ENCODE measurements at regions of chr16 and their contacts with region 1.

Region 1: DNA sequence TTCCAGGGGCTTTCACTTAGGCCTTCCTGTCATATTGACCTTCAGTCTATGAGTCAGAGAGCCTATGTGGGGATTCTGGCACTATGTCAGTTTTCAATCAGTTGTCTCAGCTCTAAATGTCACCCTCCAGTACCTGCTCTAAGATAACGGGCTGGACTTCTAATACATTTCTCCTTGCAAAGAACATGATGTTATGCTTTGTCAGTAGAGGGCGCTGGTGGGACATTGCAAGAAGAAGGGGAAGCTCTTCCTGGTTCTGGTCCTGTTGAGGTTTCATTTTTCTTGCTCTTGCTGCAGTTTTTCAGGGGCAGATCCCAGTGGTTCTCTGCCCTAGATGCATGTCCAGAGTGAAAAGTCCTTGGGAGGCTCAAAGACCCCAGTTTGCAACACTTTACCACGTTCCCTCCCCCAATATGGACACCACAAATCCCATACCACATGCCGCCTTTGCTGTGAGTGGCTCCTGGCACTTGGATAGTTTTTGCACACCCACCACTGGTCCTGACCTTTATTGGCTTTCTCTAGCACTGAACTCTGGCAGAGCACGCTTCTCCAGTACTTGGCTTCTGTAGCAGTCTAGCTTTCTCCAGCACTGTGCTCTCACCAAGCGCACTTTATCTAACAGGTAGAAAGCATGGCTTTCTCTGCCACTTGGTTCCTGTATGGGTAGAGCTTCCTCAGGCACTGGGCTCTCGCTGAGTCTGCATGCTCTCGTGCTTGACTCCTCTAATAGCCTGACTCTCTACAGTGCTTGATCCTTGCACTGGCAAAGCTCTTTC is 49.0 kb downstream of the BCL7C start:
- DNase-seq: peak; percentile 13 to 82
- H3K4me3 ChIP-seq: no peak overlapping the region
- H3K27ac ChIP-seq: no peak overlapping the region
- H3K4me1 ChIP-seq: no peaks in the 10 kb centered on the region
- H3K27me3 ChIP-seq: no peaks in the 10 kb centered on the region
- CTCF ChIP-seq: peak; percentile 3 to 90 (median 86)
- EP300 ChIP-seq: no peak
- POLR2A ChIP-seq: no peak
- RAD21 ChIP-seq: peak; percentile 90 to 94

Region 2: DNA sequence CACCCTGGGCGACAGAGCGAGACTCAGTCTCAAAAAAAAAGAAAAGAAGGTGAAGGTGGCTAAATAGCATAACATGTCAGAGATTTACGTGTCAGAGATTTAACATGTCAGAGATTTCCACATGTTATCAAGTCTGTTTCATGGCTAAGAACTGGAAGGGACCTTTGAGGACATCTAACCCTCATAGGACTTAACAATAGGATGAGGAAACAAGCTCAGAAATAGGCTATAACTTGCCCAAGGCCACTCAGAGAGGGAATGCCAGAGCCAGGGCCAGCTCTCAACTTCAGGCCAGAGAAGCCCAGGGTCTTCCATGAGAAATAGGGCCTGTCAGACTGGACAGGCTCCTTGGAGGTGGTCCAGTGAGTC is 31.1 kb before region 1 on chr16:
- CTCF ChIA-PET with region 1: interaction called, 19 read pairs
- POLR2A ChIA-PET with region 1: no interaction called
- DNase-seq: no peak
- H3K4me3 ChIP-seq: peak overlapping the region; percentile 21 to 55 (median 29); a peak in 5 of 8 replicates
- H3K27ac ChIP-seq: no peak overlapping the region
- H3K4me1 ChIP-seq: no peaks in the 10 kb centered on the region; a peak in 4 of 7 replicates
- H3K27me3 ChIP-seq: peaks cover 0 to 5% (median 2%) of the 10 kb centered on the region in 4 experiments; a peak in 1 of 7 replicates
- CTCF ChIP-seq: no peak
- EP300 ChIP-seq: no peak
- POLR2A ChIP-seq: no peak
- RAD21 ChIP-seq: no peak

Region 3: GRCh38 chr16:30829130-30830071 is 15.5 kb before region 1 on chr16:
- CTCF ChIA-PET with region 1: interaction called, 20 read pairs
- POLR2A ChIA-PET with region 1: interaction called, 3 read pairs
- DNase-seq: no peak
- H3K4me3 ChIP-seq: no peak overlapping the region
- H3K27ac ChIP-seq: no peak overlapping the region
- H3K4me1 ChIP-seq: no peaks in the 10 kb centered on the region
- H3K27me3 ChIP-seq: peaks cover 0 to 2% (median 0%) of the 10 kb centered on the region in 4 experiments; a peak in 3 of 7 replicates
- CTCF ChIP-seq: peak in 1 of 3 experiments; percentile 18; a peak in 1 of 4 replicates
- EP300 ChIP-seq: no peak
- POLR2A ChIP-seq: no peak
- RAD21 ChIP-seq: no peak

Region 4: DNA sequence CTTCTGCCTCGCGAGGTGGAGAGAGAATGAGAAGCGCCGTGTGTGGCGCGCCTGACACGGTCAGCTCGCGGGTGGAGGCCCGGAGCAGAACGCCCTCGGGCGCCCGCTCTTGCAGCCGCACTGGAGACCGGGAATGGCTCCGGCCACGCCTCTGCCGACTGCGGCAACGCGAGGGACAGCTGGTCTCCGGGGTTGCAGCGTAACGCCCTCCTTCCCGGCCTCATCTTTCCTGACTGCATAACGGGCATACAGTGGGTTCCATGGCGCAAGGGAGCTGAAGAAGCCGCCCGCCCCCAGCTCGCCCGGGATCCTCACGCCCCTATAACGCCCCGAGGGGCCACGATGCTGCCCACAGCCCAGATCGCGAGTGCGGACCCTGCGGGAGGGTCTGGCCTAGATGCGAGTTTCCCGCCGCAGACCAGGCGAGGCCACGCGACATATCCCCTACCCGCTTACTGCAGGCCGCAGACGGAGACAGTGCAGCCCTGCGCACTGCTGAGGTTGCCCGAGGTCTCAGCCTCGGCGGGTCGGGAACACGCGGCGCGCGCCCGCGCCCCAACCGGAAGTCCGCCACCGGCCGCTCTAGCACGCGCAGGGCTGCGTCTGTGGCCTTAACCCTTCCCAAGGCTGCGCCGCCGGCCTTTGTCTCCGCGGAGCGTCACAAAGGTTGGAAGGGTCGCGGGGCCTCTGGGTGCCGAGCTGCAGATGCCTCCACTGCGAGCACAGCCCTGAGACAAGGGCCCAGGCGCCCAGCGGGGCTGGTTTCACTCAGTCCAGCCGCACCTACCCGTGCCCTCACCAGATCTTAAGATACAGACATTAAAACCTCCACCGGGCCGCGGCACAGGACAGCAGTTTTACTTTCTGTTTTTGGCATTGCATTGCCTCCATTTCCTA is 30.2 kb after region 1 on chr16:
- CTCF ChIA-PET with region 1: interaction called, 49 read pairs
- POLR2A ChIA-PET with region 1: interaction called, 12 read pairs
- DNase-seq: peak in 1 of 2 experiments; percentile 94
- H3K4me3 ChIP-seq: peak overlapping the region; percentile 61 to 97 (median 92)
- H3K27ac ChIP-seq: peak overlapping the region; percentile 77
- H3K4me1 ChIP-seq: peaks cover 0 to 6% (median 3%) of the 10 kb centered on the region in 4 experiments; a peak in 5 of 7 replicates
- H3K27me3 ChIP-seq: peaks cover 0 to 26% (median 11%) of the 10 kb centered on the region in 4 experiments; a peak in 5 of 7 replicates
- CTCF ChIP-seq: peak in 1 of 3 experiments; percentile 11; a peak in 1 of 4 replicates
- EP300 ChIP-seq: 0 out of 3 replicates have a peak, but pooled peaks of 1 of the 2 experiments have one; percentile 44
- POLR2A ChIP-seq: peak; percentile 94 to 96
- RAD21 ChIP-seq: peak in 1 of 2 experiments; percentile 9; a peak in 1 of 4 replicates

Region 5: GRCh38 chr16:30902029-30902972 is 57.4 kb after region 1 on chr16:
- CTCF ChIA-PET with region 1: interaction called, 69 read pairs
- POLR2A ChIA-PET with region 1: interaction called, 7 read pairs
- DNase-seq: peak in 1 of 2 experiments; percentile 81
- H3K4me3 ChIP-seq: peak overlapping the region; percentile 42 to 67 (median 53)
- H3K27ac ChIP-seq: peak overlapping the region; percentile 18; the same call in 1 of the 2 replicates
- H3K4me1 ChIP-seq: peaks cover 2 to 5% (median 4%) of the 10 kb centered on the region in 4 experiments; a peak in 5 of 7 replicates
- H3K27me3 ChIP-seq: peaks cover 0 to 19% (median 3%) of the 10 kb centered on the region in 4 experiments; a peak in 4 of 7 replicates
- CTCF ChIP-seq: peak; percentile 43 to 72 (median 69)
- EP300 ChIP-seq: 0 out of 3 replicates have a peak, but pooled peaks of 1 of the 2 experiments have one; percentile 8
- POLR2A ChIP-seq: no peak
- RAD21 ChIP-seq: peak in 1 of 2 experiments; percentile 51; a peak in 2 of 4 replicates

Region 6: GRCh38 chr16:30922960-30923535 is 78.2 kb after region 1 on chr16:
- CTCF ChIA-PET with region 1: interaction called, 63 read pairs
- POLR2A ChIA-PET with region 1: interaction called, 4 read pairs
- DNase-seq: peak; percentile 92 to 99
- H3K4me3 ChIP-seq: peak overlapping the region; percentile 57 to 88 (median 84)
- H3K27ac ChIP-seq: peak overlapping the region; percentile 98
- H3K4me1 ChIP-seq: peaks cover 0 to 9% (median 2%) of the 10 kb centered on the region in 4 experiments; a peak in 4 of 7 replicates
- H3K27me3 ChIP-seq: no peaks in the 10 kb centered on the region
- CTCF ChIP-seq: no peak
- EP300 ChIP-seq: no peak
- POLR2A ChIP-seq: peak; percentile 43 to 78
- RAD21 ChIP-seq: no peak